PC-3 (cell line): ENCODE measurements at regions of chr4 and their contacts with region 1.

Region 1: GRCh38 chr4:78551479-78552351 is at the start of gene ANXA3:
- DNase-seq: peak; percentile 74
- ATAC-seq: peak; percentile 74
- H3K4me3 ChIP-seq: peak within 1 kb of the TSS; percentile 83
- H3K27ac ChIP-seq: peak within 1 kb of the TSS; percentile 88
- H3K4me1 ChIP-seq: peaks cover 38% of the 10 kb centered on the region
- H3K27me3 ChIP-seq: no peaks in the 10 kb centered on the region
- CTCF ChIP-seq: no peak
- total RNA-seq, gene ANXA3: 223 and 263 TPM in 2 replicates

Region 2: GRCh38 chr4:77203380-77204197 is 1348.1 kb before region 1 on chr4:
- CTCF ChIA-PET with region 1: no interaction called
- POLR2A ChIA-PET with region 1: no interaction called
- intact Hi-C with region 1: no loop called
- DNase-seq: peak; percentile 79
- ATAC-seq: peak; percentile 42
- H3K4me3 ChIP-seq: no peak overlapping the region
- H3K27ac ChIP-seq: peak overlapping the region; percentile 98
- H3K4me1 ChIP-seq: peaks cover 32% of the 10 kb centered on the region
- H3K27me3 ChIP-seq: no peaks in the 10 kb centered on the region
- CTCF ChIP-seq: peak; percentile 80

Region 3: GRCh38 chr4:78529569-78530209 is 22.0 kb before region 1 on chr4:
- CTCF ChIA-PET with region 1: no interaction called
- POLR2A ChIA-PET with region 1: interaction called, 4 read pairs
- intact Hi-C with region 1: loop called (anchors 1 kb)
- DNase-seq: peak; percentile 79
- ATAC-seq: peak; percentile 66
- H3K4me3 ChIP-seq: no peak overlapping the region
- H3K27ac ChIP-seq: peak overlapping the region; percentile 88
- H3K4me1 ChIP-seq: peaks cover 49% of the 10 kb centered on the region
- H3K27me3 ChIP-seq: no peaks in the 10 kb centered on the region
- CTCF ChIP-seq: no peak

Region 4: GRCh38 chr4:78569291-78569821 is 17.6 kb after region 1 on chr4:
- CTCF ChIA-PET with region 1: no interaction called
- POLR2A ChIA-PET with region 1: no interaction called
- intact Hi-C with region 1: loop called (anchors 1 kb)
- DNase-seq: peak; percentile 92
- ATAC-seq: peak; percentile 70
- H3K4me3 ChIP-seq: peak overlapping the region; percentile 40; the same call in 1 of the 2 replicates
- H3K27ac ChIP-seq: peak overlapping the region; percentile 49
- H3K4me1 ChIP-seq: peaks cover 54% of the 10 kb centered on the region
- H3K27me3 ChIP-seq: no peaks in the 10 kb centered on the region
- CTCF ChIP-seq: no peak